Right ventricle myocardium inferior (tissue), 1 donor: ENCODE measurements at regions of chr22 and their contacts with region 1.

Region 1: DNA sequence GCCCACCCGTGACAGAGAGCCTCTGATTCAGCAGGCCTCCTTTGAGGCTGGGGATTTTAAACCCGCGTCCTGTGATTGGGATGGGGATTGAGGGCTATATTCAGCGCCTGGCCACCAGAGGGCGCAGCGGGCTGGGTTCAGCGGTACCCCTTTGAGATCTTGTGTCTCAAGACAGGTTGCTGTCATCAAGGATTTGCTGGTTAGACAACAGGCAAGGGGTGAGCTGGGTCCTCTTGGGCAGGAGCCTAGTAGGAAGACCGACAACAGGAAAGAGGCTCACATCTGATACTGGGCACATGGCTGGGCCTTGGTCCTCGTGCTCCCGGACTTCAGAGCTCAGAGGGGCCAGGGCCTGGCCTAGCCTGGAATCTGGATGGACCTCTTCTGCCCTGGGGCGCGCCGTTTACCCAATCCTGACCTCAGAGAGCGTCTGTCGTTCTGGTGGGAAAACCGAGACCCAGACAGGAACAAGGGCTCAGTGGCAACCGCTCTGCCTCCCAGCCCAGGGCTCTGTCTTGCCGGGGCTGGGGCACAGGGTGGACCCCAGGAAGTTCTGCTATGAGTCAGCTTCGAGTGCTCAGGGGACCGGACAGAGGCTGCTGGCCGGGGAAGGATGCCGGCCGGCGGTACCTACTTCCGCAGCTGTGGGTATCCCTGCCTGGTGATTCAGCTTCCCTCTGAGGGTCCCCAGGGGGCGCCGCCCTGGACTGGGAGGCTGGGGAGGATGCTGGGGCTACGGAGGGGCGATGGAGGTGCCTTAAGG is 929 bp upstream of the SLC35E4 start:
- DNase-seq: peak; percentile 93
- ATAC-seq: peak; percentile 70

Region 2: DNA sequence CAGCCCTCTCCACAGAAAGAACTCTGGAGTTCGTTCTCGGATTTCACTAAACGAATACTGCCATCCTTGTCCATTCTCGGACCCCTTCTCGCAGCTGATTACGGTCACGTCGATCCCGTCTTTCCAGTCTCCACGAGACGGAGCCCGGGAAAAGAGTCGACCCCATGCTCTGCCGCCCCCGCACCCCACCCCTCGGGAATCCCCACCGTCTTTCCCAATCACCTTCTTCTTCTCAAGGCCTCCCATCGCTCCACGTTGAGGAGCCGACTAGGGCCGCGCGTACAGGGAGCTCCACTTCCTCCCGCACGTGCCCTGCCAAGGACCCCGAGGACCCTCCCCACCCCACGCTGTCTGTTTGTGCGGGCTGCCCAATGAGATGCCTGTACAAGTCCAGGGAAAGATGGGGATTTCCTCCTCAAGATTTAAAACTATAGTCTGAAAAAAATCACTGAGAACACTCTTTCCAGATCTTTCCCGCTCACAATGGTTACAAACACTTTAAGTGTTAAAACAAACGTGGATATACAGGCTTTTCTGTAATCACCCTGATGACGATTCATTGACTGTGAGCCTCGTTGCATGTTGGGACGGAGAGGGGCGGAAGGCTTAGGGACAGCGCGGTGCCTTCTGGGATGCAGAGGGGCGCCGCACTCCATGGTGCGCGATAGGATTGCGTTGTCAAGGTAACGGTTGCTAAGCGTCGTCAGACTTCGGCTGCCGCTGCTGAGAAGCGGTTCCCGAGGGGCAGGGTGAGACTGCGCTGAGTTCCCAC is 42.9 kb before region 1 on chr22 and contains the start of gene PES1:
- intact Hi-C with region 1: loop called (anchors 2 kb)
- DNase-seq: peak; percentile 96
- ATAC-seq: peak; percentile 100
- total RNA-seq, gene PES1: 22.4 TPM

Region 3: DNA sequence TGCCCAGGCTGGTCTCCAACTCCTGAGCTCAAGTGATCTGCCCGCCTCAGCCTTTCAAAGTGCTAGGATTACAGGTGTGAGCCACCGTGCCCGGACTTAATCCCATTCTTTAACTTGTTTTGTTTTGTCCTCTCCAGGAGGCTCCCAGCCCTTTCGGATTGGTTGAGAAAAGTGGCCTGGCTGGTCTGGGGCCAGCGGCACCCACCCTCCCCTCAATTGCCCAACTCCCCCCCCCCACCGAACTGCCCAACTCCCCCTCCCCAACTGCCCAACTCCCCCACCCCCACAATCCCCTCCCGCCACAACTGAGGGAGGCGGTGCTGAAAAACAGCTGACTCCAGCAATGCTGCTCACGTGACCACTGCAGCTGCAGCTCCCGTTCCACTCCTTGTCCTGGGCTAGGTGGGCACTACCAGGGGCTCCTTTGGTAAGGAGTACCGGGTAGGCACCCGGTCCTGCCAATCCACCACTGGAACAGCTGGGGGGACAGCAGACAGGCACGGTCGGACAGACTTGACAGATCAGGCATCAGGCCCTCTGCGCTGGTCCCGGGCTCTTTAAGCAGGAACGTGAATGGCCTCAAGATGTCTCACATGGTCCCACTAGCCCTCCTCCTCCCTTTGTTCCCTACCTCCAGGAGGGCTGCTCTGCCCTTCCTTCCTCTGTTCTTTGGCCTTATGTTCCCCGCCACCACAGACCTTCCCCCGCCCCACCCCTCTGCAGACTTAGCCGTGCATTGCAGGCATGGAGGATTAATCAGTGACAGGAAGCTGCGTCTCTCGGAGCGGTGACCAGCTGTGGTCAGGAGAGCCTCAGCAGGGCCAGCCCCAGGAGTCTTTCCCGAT is 28.0 kb before region 1 on chr22 and contains the start of gene TCN2:
- intact Hi-C with region 1: loop called (anchors 2 kb)
- DNase-seq: peak; percentile 84
- ATAC-seq: peak; percentile 80
- total RNA-seq, gene TCN2: 16.7 TPM

Region 4: GRCh38 chr22:30667494-30668385 is 33.1 kb after region 1 on chr22 and contains the start of gene DUSP18:
- intact Hi-C with region 1: loop called (anchors 1 kb)
- DNase-seq: peak; percentile 98
- ATAC-seq: peak; percentile 99
- total RNA-seq, gene DUSP18: 2.8 TPM

Region 5: DNA sequence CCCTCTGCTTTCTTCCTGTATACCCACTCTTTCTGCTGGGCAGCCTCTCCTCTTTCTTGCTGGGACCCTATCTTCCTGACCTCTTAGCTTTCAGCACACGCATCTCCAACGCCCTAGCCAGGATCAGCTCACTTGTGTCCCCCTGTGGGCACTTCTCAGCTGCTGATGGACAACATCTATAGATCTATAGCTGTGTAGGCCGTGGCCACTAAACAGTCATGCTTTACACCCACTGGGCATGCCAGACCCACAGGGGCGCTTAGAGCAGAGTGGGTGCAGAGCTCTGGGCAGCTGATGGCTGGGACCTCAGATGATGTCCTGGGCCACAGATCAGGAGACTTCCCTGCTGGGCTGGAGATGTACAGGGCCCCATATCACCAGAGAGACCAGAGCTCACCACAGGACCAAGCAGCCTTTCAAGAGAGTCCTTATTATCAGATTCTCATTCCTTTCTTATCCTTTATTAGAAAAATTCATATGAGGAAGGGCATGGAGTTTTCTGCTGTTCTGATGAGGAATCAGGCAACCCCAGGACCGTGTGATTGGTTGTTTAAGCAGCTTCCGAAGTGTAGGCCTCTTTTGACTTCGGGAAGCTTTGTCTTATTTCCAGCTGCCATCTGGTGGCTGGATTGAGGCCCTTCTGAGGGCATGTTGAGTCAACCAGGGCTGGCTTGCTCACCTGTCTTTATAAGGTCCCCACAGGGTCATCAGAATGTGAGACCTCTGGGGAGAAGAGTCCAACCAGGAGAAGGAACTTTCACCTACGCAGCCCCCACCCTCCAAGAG is 120.5 kb after region 1 on chr22:
- intact Hi-C with region 1: loop called (anchors 1 kb)
- DNase-seq: no peak
- ATAC-seq: peak; percentile 45

Region 6: DNA sequence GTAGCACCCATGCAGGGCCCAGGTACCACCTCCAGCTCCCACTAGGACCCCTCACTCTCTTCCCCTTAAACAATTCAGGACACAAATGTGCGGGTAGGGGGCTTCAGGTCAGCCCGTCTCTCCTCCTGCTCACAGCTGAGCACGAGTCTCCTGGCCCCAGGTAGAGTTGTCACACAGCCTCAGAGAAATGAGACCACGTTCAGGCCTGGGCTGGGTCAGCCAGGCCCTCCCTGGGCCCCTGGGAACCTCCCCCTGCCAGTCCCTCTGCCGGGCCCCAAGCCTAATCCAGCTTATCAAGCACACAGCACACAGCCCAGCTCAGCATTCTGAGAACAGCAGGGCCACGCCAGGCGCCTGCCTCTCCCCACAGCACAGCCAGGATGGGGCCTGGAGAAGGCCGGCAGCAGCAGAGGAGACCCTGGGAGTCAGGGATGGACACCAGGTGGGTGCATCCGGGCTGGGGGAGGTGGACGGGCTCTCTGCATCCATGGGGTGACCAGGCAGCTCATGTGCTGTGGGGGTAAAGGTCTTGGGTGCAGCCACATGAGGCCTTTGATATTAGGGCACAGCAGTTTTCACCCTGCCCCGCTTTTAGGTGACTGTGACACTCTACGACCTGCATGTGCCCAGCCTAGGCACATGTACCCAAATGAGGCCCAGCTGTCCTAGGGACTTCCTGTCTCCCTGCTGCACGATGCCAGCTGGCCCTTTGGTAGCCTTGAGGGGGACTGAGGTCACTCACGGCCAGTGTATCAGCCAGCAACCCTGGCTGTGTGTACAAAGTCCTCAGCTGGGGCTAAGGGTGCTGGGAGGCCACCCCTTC is 246.9 kb after region 1 on chr22:
- intact Hi-C with region 1: no loop called
- DNase-seq: peak; percentile 65
- ATAC-seq: peak; percentile 63

Region 7: DNA sequence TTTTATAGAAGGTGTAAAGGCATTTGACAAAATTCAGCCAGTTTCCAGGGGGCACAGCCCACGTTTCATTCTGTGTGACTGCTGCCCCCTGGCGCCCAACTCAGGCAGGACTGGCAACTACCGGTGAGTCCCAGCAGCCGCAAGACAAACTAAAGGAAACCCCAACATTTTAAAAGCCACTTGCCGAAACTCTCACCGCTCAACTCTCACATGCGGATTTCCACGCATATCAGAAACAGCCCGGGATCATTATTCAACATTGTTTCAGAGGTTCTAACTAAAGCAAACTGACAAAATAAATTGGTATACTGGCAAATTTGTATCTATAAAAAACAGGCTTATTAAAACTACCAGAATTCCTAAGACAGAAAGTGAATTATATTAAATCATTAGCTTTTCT is 285.8 kb after region 1 on chr22:
- intact Hi-C with region 1: loop called (anchors 5 kb)
- DNase-seq: peak; percentile 88
- ATAC-seq: peak; percentile 76

Region 8: DNA sequence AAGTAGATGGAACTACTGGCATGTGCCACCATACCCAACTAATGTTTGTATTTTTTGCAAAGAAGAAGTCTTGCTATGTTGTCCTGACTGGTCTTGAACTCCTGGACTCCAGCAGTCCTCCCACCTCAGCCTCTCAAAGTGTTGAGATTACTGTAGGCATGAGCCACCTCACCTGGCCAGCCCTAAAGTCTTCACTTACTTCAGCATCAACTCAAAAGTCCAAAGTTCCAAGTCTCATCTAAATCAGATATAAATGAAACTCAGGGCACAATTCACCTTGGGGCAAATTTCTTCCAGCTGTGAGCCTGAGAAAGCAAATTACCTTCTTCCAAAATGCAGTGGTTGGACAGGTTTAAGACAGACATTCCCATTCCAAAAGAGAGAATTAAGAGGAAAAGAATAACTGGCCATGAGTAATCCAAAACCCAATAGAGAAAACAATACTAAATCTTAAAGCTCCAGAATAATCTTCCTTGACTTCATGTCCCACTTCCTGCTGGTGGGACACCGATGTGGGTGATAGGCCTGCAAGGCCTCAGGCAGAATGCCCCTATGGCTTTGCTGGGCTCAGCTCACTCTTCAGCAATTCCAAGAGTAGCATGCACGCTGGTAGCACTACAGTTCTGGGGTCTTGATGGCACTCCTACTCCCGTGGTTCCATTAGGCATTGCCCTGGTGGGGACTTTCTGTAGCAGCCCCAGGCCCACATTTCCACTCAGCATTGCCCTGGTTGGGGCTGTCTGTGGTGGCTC is 384.7 kb after region 1 on chr22:
- intact Hi-C with region 1: no loop called
- DNase-seq: no peak
- ATAC-seq: no peak